ENCODE measurements at regions of chr20 and their contacts with region 1.

Region 1: DNA sequence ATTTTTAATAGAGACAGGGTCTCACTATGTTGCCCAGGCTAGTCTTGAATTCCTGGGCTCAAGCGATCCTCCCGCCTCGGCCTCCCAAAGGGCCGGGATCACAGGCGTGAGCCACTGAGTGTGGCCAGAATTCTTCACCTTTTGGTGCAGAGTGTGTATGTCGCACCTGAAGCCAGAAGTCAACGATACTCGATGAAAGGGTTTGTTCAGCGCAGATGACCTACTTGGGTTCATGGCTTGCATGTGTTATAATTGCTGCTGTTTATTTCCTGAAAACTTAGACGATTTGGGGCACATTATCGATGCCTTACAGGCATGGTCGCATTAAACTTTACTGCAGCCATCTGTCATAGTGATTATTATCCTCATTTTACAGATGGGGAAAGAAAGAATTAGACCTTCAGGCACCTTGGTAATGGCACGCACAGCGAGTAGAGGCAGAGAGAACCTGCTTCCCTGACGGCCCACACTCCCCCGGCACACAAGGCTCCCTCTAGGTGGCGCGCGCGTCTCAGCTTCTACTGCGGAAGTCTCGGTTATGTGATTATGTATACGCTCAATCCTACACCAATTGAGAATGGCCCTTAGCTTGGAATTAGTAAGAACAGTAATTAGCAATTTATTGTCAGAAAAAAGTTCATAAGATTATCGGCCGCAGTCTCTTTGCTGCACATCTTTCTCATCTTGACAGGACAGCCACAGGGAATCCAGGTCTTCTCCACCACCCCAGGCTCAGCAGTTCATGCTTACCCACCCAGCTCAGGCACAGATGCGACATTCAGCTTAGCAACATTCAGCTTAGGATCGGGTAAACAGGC is 212.8 kb upstream of the PROKR2 start:
- DNase-seq: peak; percentile 59 to 88 (median 64)
- ATAC-seq: peak; percentile 96
- H3K4me3 ChIP-seq: no peak overlapping the region
- H3K27ac ChIP-seq: no peak overlapping the region
- H3K4me1 ChIP-seq: peaks cover 9 to 10% of the 10 kb centered on the region in 2 experiments; a peak in 4 of 5 replicates
- H3K27me3 ChIP-seq: peaks cover 0 to 9% of the 10 kb centered on the region in 2 experiments; a peak in 1 of 5 replicates
- CTCF ChIP-seq: peak; percentile 82 to 91 (median 83)
- EP300 ChIP-seq: no peak
- POLR2A ChIP-seq: no peak
- RAD21 ChIP-seq: peak; percentile 72 to 85

Region 2: GRCh38 chr20:5451643-5452210 is 77.8 kb before region 1 on chr20:
- CTCF ChIA-PET with region 1: no interaction called
- POLR2A ChIA-PET with region 1: no interaction called
- in situ Hi-C with region 1: no loop called
- intact Hi-C with region 1: no loop called
- DNase-seq: no peak
- ATAC-seq: no peak
- H3K4me3 ChIP-seq: no peak overlapping the region
- H3K27ac ChIP-seq: no peak overlapping the region
- H3K4me1 ChIP-seq: no peaks in the 10 kb centered on the region
- H3K27me3 ChIP-seq: no peaks in the 10 kb centered on the region
- CTCF ChIP-seq: no peak
- EP300 ChIP-seq: no peak
- POLR2A ChIP-seq: no peak
- RAD21 ChIP-seq: no peak

Region 3: DNA sequence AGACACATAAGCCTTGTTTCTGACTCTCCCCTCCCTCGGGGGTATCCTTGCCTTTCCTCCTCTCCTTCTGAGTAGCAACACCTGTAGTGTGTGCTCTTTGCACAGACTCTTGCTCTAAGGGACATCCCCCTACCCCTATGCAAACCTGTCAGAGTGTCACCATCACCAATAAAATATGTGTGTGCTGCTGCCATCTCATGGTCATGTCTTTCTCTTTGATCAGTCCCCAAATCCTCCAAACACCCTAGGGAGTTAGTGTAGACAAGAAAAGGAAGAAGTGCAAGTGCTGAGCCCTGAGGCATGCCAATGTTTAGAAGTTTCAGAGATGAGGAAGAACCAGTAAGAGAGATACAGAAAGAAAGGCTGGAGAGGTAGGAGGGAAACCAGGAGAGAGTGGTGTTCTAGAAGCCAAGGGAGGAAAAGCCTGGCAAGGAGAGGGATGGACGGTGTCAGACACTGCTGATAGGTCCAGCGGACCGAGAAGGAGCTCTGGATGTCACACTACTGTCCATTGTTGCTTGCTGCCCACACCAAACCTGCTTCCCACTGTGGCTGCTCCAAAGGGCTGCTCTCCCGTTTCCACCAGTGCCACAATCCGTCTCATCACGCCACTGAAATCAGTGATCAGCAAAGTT is 404.4 kb after region 1 on chr20:
- CTCF ChIA-PET with region 1: interaction called, 5 read pairs
- POLR2A ChIA-PET with region 1: no interaction called
- in situ Hi-C with region 1: loop called (anchors 5 kb)
- intact Hi-C with region 1: loop called (anchors 1 kb)
- DNase-seq: peak in 2 of 4 experiments; percentile 12 to 21
- ATAC-seq: peak; percentile 80
- H3K4me3 ChIP-seq: no peak overlapping the region
- H3K27ac ChIP-seq: no peak overlapping the region
- H3K4me1 ChIP-seq: no peaks in the 10 kb centered on the region
- H3K27me3 ChIP-seq: no peaks in the 10 kb centered on the region
- CTCF ChIP-seq: peak; percentile 14 to 46 (median 34); a peak in 4 of 6 replicates
- EP300 ChIP-seq: no peak
- POLR2A ChIP-seq: no peak
- RAD21 ChIP-seq: peak in 1 of 2 experiments; percentile 56; a peak in 3 of 4 replicates

Region 4: GRCh38 chr20:6074145-6074561 is 544.6 kb after region 1 on chr20:
- CTCF ChIA-PET with region 1: interaction called, 36 read pairs
- POLR2A ChIA-PET with region 1: no interaction called
- in situ Hi-C with region 1: loop called (anchors 5 kb)
- intact Hi-C with region 1: loop called (anchors 1 kb)
- DNase-seq: peak in 3 of 4 experiments; percentile 18 to 48 (median 37)
- ATAC-seq: peak; percentile 89
- H3K4me3 ChIP-seq: no peak overlapping the region
- H3K27ac ChIP-seq: no peak overlapping the region
- H3K4me1 ChIP-seq: peaks cover 0 to 9% of the 10 kb centered on the region in 2 experiments; a peak in 2 of 5 replicates
- H3K27me3 ChIP-seq: peaks cover 0 to 2% of the 10 kb centered on the region in 2 experiments; a peak in 1 of 5 replicates
- CTCF ChIP-seq: peak; percentile 34 to 46 (median 43); a peak in 5 of 6 replicates
- EP300 ChIP-seq: no peak
- POLR2A ChIP-seq: no peak
- RAD21 ChIP-seq: peak in 1 of 2 experiments; percentile 69; a peak in 2 of 4 replicates